Activated CD4-positive, alpha-beta memory T cell treated with anti-CD3 and anti-CD28 coated beads, Interleukin-2, amount 10 ng/mL, durations not matched to agents 7 days and 5 days (primary cell): ENCODE measurements at regions of chr17 and their contacts with region 1.

Region 1: DNA sequence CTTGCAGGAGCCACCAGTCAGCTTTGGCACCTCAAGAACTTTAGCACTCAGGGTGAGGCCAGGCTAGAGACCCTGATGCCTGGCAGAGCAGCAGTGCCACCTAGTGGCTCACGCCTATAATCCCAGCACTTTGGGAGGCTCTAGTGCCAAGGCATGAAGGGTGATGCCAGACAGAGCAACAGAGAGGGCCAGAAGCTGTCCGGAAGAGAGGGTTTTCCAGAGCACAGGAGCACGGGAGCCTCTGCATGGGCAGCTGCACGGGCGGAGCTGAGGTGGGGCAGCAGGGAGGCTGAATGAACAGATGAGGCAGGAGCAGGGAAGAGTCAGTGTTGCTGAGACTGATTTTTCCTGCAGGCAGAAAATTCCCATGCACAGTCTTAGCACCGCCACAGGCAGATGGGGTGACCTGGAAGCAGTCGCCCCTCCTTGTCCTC is 38.9 kb downstream of the MYH3 start:
- DNase-seq: peak; percentile 64
- H3K4me3 Mint-ChIP-seq: no peak overlapping the region
- H3K27ac Mint-ChIP-seq: no peak overlapping the region
- H3K4me1 Mint-ChIP-seq: no peaks in the 10 kb centered on the region
- H3K27me3 Mint-ChIP-seq: peaks cover 3% of the 10 kb centered on the region

Region 2: DNA sequence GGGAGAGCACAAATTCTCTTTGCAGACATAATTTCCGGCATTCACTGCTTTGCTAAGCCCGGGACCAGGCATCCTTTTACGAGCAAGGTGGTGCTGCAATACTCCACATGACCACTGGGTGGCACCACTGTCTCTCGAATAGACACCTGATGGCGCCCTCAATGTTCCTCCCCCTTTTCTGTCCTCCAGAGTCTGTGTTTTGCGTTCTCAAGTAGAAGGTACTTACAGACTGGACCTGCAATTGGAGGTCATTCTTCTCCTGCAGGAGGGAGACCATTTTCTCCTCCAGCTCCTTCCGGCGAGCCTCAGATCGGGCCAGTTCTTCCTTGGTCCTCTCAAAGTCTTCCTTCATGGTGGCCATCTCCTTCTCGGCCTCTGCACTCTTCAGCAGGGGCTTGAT is 290.6 kb before region 1 on chr17:
- CTCF ChIA-PET with region 1: interaction called, 22 read pairs
- POLR2A ChIA-PET with region 1: no interaction called
- DNase-seq: peak; percentile 70
- H3K4me3 Mint-ChIP-seq: no peak overlapping the region
- H3K27ac Mint-ChIP-seq: no peak overlapping the region
- H3K4me1 Mint-ChIP-seq: no peaks in the 10 kb centered on the region
- H3K27me3 Mint-ChIP-seq: no peaks in the 10 kb centered on the region

Region 3: DNA sequence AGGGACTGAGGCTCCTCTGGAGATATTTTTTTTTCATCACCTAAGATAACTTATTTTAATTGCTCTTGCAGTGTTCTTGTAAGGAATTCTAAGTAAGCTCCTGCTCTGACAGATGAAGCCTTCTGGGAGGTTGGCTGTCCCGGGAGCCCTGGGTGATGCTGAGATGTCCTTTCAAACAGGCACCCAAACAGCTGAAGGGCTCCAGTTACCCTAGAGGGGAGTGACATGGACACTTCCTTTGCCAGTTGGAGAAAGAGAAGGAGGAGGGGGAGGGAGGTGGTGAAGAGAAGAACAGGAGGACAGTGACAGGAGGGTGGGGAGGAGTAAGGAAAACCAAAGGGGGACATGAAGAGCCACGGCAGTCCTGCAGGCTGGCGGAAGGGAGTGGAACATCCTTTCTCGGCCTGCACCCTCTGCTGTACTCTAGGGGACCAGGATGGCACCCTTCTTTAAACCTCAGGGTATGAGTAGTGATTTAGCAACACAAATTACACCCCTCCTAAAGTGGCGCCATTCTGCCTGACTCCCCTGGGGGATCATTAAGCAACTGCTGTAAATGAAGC is 12.9 kb before region 1 on chr17:
- CTCF ChIA-PET with region 1: interaction called, 23 read pairs
- POLR2A ChIA-PET with region 1: no interaction called
- DNase-seq: no peak
- H3K4me3 Mint-ChIP-seq: no peak overlapping the region
- H3K27ac Mint-ChIP-seq: no peak overlapping the region
- H3K4me1 Mint-ChIP-seq: no peaks in the 10 kb centered on the region
- H3K27me3 Mint-ChIP-seq: peaks cover 4% of the 10 kb centered on the region

Region 4: DNA sequence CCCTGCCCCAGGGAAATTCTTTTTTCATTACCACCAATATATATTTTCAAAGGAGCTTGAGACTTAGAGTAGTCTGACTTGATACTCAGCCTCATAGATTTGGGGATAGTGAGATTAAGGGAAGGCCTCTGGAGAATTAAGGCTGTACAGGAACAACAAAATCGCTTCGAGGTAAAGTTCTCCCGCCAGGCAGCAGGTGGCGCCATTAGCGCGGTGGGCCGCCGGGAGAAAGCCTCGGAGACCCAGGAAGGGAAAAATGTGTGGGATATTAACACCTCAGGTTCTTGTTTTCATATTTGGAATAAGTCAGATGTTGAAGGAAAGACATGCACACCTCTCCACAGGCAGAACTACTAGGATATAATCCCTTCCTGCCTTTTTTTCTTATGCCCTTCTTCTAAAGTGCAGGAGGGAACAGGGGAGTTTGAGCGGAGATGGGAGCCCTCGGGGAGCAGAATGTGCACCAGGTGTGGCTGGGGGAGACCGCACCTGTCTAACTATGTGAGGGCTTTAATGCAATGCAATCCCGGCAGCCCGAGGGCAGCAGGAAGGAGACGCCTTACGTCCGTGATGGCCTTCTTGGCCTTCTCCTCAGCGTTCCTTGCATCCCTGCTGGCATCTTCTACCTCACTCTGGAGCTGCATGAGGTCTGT is 13.0 kb after region 1 on chr17:
- CTCF ChIA-PET with region 1: interaction called, 137 read pairs
- POLR2A ChIA-PET with region 1: no interaction called
- DNase-seq: peak; percentile 24
- H3K4me3 Mint-ChIP-seq: no peak overlapping the region
- H3K27ac Mint-ChIP-seq: no peak overlapping the region
- H3K4me1 Mint-ChIP-seq: peaks cover 8% of the 10 kb centered on the region
- H3K27me3 Mint-ChIP-seq: no peaks in the 10 kb centered on the region